ENCODE measurements at regions of chr10 and their contacts with region 1.

Region 1: GRCh38 chr10:62284221-62284620 is 15.6 kb upstream of the RTKN2 start:
- DNase-seq: no peak
- H3K4me3 ChIP-seq: no peak overlapping the region
- H3K27ac ChIP-seq: no peak overlapping the region
- H3K4me1 ChIP-seq: no peaks in the 10 kb centered on the region
- CTCF ChIP-seq: no peak

Region 2: GRCh38 chr10:62130948-62131347 is 153.3 kb before region 1 on chr10:
- CTCF ChIA-PET with region 1: no interaction called
- POLR2A ChIA-PET with region 1: no interaction called
- intact Hi-C with region 1: no loop called
- DNase-seq: no peak
- H3K4me3 ChIP-seq: no peak overlapping the region
- H3K27ac ChIP-seq: no peak overlapping the region
- H3K4me1 ChIP-seq: no peaks in the 10 kb centered on the region
- CTCF ChIP-seq: no peak

Region 3: GRCh38 chr10:62297857-62298256 is 13.6 kb after region 1 on chr10:
- CTCF ChIA-PET with region 1: no interaction called
- POLR2A ChIA-PET with region 1: no interaction called
- intact Hi-C with region 1: no loop called
- DNase-seq: no peak
- H3K4me3 ChIP-seq: no peak overlapping the region
- H3K27ac ChIP-seq: no peak overlapping the region
- H3K4me1 ChIP-seq: no peaks in the 10 kb centered on the region
- CTCF ChIP-seq: no peak

Region 4: DNA sequence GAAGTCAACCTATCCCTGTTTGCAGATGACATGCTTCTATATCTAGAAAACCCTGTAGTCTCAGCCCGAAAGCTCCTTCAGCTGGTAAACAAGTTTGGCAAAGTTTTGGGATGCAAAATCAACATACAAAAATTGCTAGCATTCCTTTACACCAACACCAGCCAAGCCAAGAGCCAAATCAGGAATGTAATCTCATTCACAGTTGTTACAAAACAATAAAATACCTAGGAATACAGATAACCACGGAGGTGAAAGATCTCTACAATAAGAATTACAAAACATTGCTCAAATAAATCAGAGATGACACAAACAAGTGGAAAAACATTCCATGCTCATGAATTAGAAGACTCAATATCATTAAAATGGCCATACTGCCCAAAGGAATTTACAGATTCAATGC is 39.5 kb after region 1 on chr10:
- CTCF ChIA-PET with region 1: no interaction called
- POLR2A ChIA-PET with region 1: no interaction called
- intact Hi-C with region 1: loop called (anchors 5 kb)
- DNase-seq: no peak
- H3K4me3 ChIP-seq: no peak overlapping the region
- H3K27ac ChIP-seq: no peak overlapping the region
- H3K4me1 ChIP-seq: no peaks in the 10 kb centered on the region
- CTCF ChIP-seq: no peak

Region 5: GRCh38 chr10:62399211-62399610 is 115.0 kb after region 1 on chr10:
- CTCF ChIA-PET with region 1: no interaction called
- POLR2A ChIA-PET with region 1: no interaction called
- intact Hi-C with region 1: no loop called
- DNase-seq: no peak
- H3K4me3 ChIP-seq: no peak overlapping the region
- H3K27ac ChIP-seq: no peak overlapping the region
- H3K4me1 ChIP-seq: no peaks in the 10 kb centered on the region
- CTCF ChIP-seq: no peak